ENCODE measurements at regions of chr7 and their contacts with region 1.

Region 1: DNA sequence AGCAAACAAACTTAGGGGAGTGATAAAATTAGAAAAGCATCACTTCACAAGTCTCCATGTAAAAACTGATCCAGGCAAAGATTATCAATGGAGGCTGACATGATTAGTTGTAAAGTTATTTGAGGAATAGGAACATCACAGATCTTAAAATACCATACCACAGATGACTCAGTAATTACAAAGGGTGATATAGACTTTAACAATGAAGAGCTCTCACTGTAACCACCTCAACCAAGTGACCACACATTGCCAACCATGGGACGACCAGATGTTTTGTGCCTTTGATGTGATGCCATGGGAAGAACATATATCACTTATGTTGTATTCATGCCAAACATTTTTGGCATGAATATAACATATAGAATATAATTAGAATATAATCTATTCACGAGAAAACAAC is 11.7 kb downstream of the AASS start:
- DNase-seq: no peak
- ATAC-seq: no peak
- H3K4me3 Mint-ChIP-seq: no peak overlapping the region
- H3K27ac Mint-ChIP-seq: no peak overlapping the region
- H3K4me1 Mint-ChIP-seq: peaks cover 3% of the 10 kb centered on the region
- H3K27me3 Mint-ChIP-seq: no peaks in the 10 kb centered on the region
- CTCF ChIP-seq: no peak

Region 2: GRCh38 chr7:122092964-122093797 is 39.2 kb before region 1 on chr7:
- CTCF ChIA-PET with region 1: interaction called, 5 read pairs
- POLR2A ChIA-PET with region 1: no interaction called
- intact Hi-C with region 1: loop called (anchors 5 kb)
- DNase-seq: peak; percentile 78
- ATAC-seq: peak; percentile 56
- H3K4me3 Mint-ChIP-seq: no peak overlapping the region
- H3K27ac Mint-ChIP-seq: no peak overlapping the region
- H3K4me1 Mint-ChIP-seq: no peaks in the 10 kb centered on the region
- H3K27me3 Mint-ChIP-seq: no peaks in the 10 kb centered on the region
- CTCF ChIP-seq: peak; percentile 66

Region 3: DNA sequence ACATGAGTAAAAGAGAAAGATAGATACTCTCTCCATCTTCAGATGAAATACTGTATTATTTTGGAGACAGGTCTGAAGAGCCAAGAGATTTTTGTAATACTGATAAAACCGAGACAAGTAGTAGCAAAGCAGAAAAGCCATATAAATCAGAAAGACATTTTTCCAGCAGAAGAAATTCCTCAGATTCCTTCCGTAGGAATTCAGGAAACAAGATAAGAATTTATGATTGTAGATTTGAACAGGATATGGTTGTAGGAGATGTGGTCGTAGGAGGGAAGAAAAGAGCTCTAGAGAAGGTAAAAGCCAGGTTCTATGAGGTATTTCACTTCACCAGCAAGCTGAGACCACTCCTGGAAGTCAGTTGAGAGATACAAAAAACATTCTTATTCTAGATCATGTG is 29.3 kb after region 1 on chr7:
- CTCF ChIA-PET with region 1: no interaction called
- POLR2A ChIA-PET with region 1: no interaction called
- intact Hi-C with region 1: no loop called
- DNase-seq: no peak
- ATAC-seq: no peak
- H3K4me3 Mint-ChIP-seq: no peak overlapping the region
- H3K27ac Mint-ChIP-seq: no peak overlapping the region
- H3K4me1 Mint-ChIP-seq: no peaks in the 10 kb centered on the region
- H3K27me3 Mint-ChIP-seq: no peaks in the 10 kb centered on the region
- CTCF ChIP-seq: no peak